OCI-LY7 (cell line): ENCODE measurements at regions of chr6 and their contacts with region 1.

Region 1: GRCh38 chr6:151119823-151120524 is 119.8 kb upstream of the AKAP12 start:
- DNase-seq: no peak
- H3K4me3 ChIP-seq: no peak overlapping the region
- H3K27ac ChIP-seq: no peak overlapping the region
- H3K4me1 ChIP-seq: no peaks in the 10 kb centered on the region
- CTCF ChIP-seq: no peak

Region 2: DNA sequence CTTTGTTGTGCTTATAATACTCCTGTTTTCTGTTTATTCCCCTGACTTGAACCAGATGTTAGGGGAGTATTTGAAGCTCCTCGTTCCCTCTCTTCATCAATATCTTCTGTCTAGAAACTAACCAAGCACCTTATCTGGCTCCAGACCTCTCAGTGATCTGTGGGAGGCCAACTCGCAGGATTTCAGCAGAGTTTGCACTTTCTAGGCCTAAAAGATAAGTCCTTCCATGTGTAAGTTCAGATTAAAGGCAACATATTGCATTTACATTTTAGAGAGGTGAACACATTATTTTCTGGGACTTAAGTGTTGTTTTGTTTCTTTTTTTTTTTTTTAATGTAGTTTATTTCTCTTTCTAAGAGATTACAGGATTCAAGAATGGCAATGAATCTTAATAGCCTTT is 19.6 kb before region 1 on chr6:
- CTCF ChIA-PET with region 1: no interaction called
- POLR2A ChIA-PET with region 1: interaction called, 10 read pairs
- intact Hi-C with region 1: no loop called
- DNase-seq: no peak
- H3K4me3 ChIP-seq: no peak overlapping the region
- H3K27ac ChIP-seq: no peak overlapping the region
- H3K4me1 ChIP-seq: no peaks in the 10 kb centered on the region
- CTCF ChIP-seq: no peak